Sigmoid colon (tissue), 7 donors: ENCODE measurements at regions of chr12 and their contacts with region 1.

Region 1: DNA sequence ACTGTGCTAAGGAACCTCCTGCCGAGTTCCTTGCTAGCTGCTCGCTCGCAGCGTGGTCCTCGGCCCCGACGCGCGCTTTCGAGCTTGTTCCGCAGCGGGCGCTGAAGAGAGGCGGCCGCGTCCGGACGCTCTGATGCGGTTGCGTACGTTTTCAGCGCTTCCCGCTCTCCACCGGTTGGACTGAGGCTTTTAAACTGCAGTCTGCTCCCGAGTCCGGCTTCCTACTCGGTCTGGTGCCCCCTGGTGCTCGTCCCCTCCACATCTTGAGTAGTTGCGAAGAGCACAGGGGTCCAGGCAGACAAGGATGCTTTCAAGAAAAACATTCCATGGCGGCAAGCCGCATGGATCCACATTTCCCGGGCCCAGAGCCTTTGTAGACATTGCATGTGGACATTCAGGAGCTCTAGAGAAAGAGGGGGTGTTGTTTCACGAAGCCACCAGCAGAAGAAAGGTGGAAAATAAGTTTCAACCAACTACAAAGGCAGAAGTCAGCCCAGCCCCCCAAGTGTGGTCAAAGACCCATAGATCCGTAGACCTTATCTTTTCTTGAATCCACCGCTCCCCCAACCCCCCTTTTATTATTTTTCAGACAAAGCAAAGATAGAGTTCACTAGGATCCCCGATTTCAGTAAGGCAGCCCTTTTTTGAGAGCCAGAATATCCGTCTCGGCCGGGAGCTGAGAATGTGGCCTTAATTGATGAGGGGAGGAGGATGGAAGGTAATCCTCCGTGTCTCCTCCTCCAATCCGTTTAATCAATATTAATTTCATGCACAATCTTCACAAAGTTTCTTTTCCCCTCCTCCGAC is 984 bp upstream of the WNK1 start:
- DNase-seq: peak; percentile 96
- H3K4me3 ChIP-seq: peak overlapping the region; percentile 27 to 97 (median 93)
- H3K27ac ChIP-seq: peak overlapping the region; percentile 97 to 99 (median 99)
- H3K4me1 ChIP-seq: peaks cover 0 to 42% (median 24%) of the 10 kb centered on the region in 4 donors
- H3K27me3 ChIP-seq: no peaks in the 10 kb centered on the region
- CTCF ChIP-seq: peak; percentile 66 to 78 (median 72)
- EP300 ChIP-seq: peak in 1 of 4 donors; percentile 5
- POLR2A ChIP-seq: no peak

Region 2: DNA sequence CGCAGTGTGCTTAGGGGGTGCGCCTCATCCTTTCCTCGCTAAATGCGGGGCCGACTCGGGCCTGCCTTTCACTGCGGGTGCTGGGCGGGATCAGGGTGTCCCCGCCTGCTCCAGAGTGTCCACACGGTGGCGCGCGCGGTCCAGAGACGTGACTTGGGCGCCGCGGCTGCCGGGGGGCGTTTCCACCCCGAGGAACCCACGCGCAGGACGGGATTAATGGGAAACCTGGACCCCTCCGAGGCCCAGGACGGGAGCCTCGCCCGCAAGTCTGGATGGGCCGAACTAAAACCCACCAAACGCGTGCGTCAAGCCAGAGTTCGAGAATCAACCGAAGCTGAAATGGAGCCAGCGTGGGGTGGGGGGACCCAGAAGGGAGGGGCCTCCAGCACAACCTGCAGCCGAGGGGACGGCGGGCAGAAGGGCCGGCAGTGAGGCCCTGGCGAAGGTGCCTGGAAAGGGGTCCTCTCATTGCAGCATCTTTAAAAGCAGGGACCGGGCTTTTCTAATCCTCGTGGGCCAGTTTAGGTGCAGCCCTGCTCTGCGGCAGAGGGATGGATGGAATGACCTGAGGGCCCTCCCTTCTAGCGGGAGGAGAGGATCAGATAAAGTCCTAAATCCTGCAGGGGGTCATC is 181.5 kb before region 1 on chr12:
- intact Hi-C with region 1: loop called (anchors 1 kb)
- DNase-seq: peak; percentile 93
- H3K4me3 ChIP-seq: peak overlapping the region; percentile 49 to 67 (median 62)
- H3K27ac ChIP-seq: peak overlapping the region; percentile 88 to 91 (median 90)
- H3K4me1 ChIP-seq: peaks cover 0 to 32% (median 24%) of the 10 kb centered on the region in 4 donors
- H3K27me3 ChIP-seq: no peaks in the 10 kb centered on the region
- CTCF ChIP-seq: peak; percentile 84 to 94 (median 90)
- EP300 ChIP-seq: no peak
- POLR2A ChIP-seq: no peak

Region 3: DNA sequence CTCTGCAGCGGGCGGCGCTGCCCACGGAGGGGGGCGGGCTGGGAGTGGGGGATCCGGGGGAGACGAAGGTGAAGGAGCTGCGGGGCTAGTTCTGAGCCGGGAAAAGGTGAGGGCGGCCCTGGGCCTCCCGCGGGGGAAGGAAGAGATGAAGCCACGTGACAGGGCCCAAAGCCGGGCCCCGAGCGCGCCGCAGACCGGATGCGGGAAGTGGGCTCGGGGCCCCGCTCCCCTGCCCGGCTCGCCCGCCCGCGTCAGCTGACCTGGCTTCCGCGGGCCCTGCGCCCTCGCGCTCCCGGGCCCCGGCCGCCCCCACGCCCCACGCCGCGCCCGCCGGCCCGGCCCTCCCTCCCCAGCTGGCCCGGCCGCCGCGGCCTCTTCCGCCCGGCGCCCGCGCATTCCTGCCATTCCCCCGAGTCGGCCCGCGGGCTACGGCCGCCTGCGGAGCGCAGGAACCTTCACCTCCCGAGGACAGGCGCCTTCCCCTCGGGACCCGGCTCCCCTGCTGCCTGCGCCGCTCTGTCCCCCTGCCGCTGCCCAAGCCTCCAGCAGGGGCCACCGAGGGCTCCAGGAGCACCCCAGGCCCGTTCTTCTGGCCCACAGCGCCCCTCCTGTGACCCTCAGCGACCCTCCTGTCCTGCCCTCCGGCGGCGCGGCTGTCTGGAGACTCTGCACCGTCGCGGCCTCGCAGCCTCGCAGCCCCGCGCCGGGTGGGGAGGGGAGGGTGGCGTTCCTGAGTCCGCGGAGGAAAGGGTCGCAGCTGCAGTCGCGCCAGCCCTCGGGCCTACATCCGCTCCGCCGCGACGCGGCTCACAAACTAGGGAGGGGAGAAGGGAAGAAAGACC is 108.5 kb before region 1 on chr12:
- intact Hi-C with region 1: loop called (anchors 2 kb)
- DNase-seq: peak; percentile 87
- H3K4me3 ChIP-seq: peak overlapping the region; percentile 59 to 76 (median 68)
- H3K27ac ChIP-seq: peak overlapping the region; percentile 89 to 97 (median 96)
- H3K4me1 ChIP-seq: peaks cover 0 to 45% (median 41%) of the 10 kb centered on the region in 4 donors
- H3K27me3 ChIP-seq: no peaks in the 10 kb centered on the region
- CTCF ChIP-seq: peak in 2 of 4 experiments; percentile 37 to 42
- EP300 ChIP-seq: no peak
- POLR2A ChIP-seq: no peak

Region 4: GRCh38 chr12:818733-819132 is 67.3 kb after region 1 on chr12:
- intact Hi-C with region 1: loop called (anchors 2 kb)
- DNase-seq: no peak
- H3K4me3 ChIP-seq: no peak overlapping the region
- H3K27ac ChIP-seq: peak overlapping the region in 3 of 4 donors; percentile 4 to 46 (median 30)
- H3K4me1 ChIP-seq: peaks cover 0 to 33% (median 14%) of the 10 kb centered on the region in 4 donors
- H3K27me3 ChIP-seq: no peaks in the 10 kb centered on the region
- CTCF ChIP-seq: peak in 1 of 4 experiments; percentile 12
- EP300 ChIP-seq: no peak
- POLR2A ChIP-seq: no peak

Region 5: GRCh38 chr12:990661-991349 is 239.4 kb after region 1 on chr12 and contains the start of gene ERC1:
- intact Hi-C with region 1: loop called (anchors 2 kb)
- DNase-seq: peak; percentile 94
- H3K4me3 ChIP-seq: peak within 1 kb of the TSS; percentile 77 to 97 (median 86)
- H3K27ac ChIP-seq: peak within 1 kb of the TSS; percentile 98 to 99 (median 98)
- H3K4me1 ChIP-seq: peaks cover 0 to 45% (median 34%) of the 10 kb centered on the region in 4 donors
- H3K27me3 ChIP-seq: no peaks in the 10 kb centered on the region
- CTCF ChIP-seq: no peak
- EP300 ChIP-seq: peak in 1 of 4 donors; percentile 8
- POLR2A ChIP-seq: peak; percentile 50 to 59
- total RNA-seq, gene ERC1: 34.6 to 97.8 (median 42.4) TPM

Region 6: GRCh38 chr12:1594261-1595025 is 843.0 kb after region 1 on chr12 and contains the start of gene FBXL14:
- intact Hi-C with region 1: loop called (anchors 5 kb)
- DNase-seq: peak; percentile 95
- H3K4me3 ChIP-seq: peak within 1 kb of the TSS; percentile 71 to 93 (median 81)
- H3K27ac ChIP-seq: peak within 1 kb of the TSS; percentile 93 to 100 (median 96)
- H3K4me1 ChIP-seq: peaks cover 0 to 59% (median 44%) of the 10 kb centered on the region in 4 donors
- H3K27me3 ChIP-seq: no peaks in the 10 kb centered on the region
- CTCF ChIP-seq: no peak
- EP300 ChIP-seq: no peak
- POLR2A ChIP-seq: no peak
- total RNA-seq, gene FBXL14: 7.5 to 12.2 (median 10.0) TPM